Prostate gland (tissue), 2 donors: ENCODE measurements at regions of chr1 and their contacts with region 1.

Region 1: GRCh38 chr1:64469977-64470664 is at the start of gene CACHD1:
- DNase-seq: peak; percentile 81
- H3K4me3 ChIP-seq: peak within 1 kb of the TSS; percentile 56 to 60
- H3K27ac ChIP-seq: peak within 1 kb of the TSS; percentile 81 to 82
- H3K4me1 ChIP-seq: no peaks in the 10 kb centered on the region
- H3K27me3 ChIP-seq: no peaks in the 10 kb centered on the region
- CTCF ChIP-seq: peak; percentile 15 to 74 (median 52)
- POLR2A ChIP-seq: peak; percentile 72
- total RNA-seq, gene CACHD1: 10.8 to 14.4 TPM

Region 2: DNA sequence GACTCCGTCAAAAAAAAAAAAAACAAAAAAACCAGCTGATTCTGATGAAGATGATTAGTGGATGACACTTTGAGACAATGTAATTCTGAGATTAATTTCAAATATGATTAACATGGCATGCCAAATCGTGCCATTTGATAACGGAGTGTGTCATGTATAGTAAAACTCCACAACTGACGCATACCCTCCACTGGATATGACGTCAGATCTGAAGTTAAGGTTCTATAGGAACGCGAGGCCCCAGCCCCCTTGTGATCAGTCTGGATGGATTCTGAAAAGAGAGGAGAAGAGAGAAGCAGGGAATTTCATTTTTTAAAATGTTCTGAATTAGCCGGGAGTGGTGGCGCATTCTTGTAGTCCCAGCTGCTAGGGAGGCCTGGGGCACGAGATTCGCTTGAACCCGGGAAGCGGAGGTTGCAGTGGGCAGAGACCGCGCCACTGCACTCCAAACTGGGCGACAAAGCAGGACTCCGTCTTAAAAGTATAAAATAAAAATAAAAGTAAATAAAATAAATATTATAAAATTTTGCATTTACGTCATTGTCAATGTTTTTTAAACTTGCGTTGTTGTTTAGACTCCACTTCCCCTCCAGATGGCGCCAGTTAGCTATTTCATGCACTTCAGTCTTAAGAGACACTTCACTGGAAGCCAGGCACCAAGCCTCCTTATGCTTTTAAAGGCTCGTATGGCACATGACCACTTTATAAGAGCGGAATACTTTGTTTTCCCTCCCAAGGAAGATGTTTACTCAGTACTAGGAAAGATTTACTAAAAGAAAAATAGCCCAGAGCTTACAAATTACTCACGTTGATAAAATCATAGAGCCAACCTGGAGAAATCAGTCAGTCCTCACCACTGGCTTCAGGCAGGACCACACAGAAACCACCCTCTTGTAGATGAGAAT is 201.2 kb before region 1 on chr1:
- intact Hi-C with region 1: loop called (anchors 5 kb)
- DNase-seq: peak; percentile 77
- H3K4me3 ChIP-seq: no peak overlapping the region
- H3K27ac ChIP-seq: no peak overlapping the region
- H3K4me1 ChIP-seq: no peaks in the 10 kb centered on the region
- H3K27me3 ChIP-seq: no peaks in the 10 kb centered on the region
- CTCF ChIP-seq: peak; percentile 58 to 84 (median 72)
- POLR2A ChIP-seq: no peak

Region 3: GRCh38 chr1:64508521-64509095 is 38.5 kb after region 1 on chr1:
- intact Hi-C with region 1: loop called (anchors 2 kb)
- DNase-seq: no peak
- H3K4me3 ChIP-seq: no peak overlapping the region
- H3K27ac ChIP-seq: no peak overlapping the region
- H3K4me1 ChIP-seq: no peaks in the 10 kb centered on the region
- H3K27me3 ChIP-seq: no peaks in the 10 kb centered on the region
- CTCF ChIP-seq: no peak
- POLR2A ChIP-seq: no peak

Region 4: DNA sequence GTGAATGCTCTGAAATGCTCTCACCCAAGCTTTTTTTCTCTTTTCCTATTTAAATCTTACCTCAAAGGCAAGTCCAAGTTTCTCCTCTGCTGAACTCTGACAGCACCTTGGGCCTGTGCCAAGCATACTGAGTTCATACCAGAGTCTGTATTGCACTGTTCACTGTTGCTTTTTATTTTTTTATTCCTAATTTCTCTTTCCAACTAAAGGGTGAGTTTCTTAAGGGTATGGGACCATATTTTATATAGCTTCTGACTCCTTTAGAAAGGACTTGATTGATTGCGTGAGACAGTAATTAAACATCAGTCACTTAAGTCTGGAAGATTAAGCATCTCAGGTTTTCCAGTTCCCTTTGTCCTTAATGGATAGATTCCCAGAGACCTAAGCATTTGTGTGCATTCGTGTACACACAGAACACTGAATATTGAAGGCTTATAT is 69.7 kb after region 1 on chr1:
- intact Hi-C with region 1: loop called (anchors 5 kb)
- DNase-seq: peak; percentile 26
- H3K4me3 ChIP-seq: no peak overlapping the region
- H3K27ac ChIP-seq: no peak overlapping the region
- H3K4me1 ChIP-seq: peaks cover 10% of the 10 kb centered on the region
- H3K27me3 ChIP-seq: no peaks in the 10 kb centered on the region
- CTCF ChIP-seq: no peak
- POLR2A ChIP-seq: no peak

Region 5: DNA sequence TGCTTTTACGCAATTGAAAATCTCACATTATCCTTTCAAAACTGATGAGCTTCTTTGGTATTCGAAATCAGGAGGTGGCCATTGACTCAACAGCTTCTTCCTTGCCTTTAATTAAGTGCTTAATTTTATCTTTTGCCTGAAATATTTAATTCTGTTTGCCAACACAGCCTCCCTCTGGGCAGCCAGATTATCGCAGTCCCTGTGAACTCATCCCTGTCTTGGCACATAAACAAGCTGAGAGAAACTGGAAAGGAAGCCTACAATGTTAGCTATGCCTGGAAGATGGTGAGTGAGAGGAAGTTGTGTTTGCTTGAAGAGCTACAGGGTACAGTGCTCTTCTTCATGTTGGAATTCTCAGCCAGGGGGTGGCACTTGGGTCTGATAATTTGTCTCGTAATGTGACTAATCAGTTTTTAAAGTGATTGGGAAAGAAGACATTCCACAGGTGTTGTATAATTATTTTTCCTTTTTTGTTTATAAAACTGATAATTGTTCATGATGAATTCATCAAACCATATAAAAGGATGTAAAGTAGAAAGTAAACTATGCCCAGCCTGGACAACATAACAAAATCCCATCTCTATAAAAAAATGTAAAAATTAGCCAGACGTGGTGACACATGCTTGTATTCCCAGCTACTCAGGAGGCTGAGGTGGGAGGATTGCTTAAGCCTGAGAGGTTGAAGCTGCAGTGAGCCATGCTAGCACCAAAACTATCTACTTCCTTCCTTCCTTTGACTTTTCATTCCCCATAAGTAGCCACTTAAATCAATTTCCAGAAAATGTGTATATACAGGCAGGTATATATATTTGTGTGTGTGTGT is 184.6 kb after region 1 on chr1:
- intact Hi-C with region 1: loop called (anchors 5 kb)
- DNase-seq: no peak
- H3K4me3 ChIP-seq: no peak overlapping the region
- H3K27ac ChIP-seq: no peak overlapping the region
- H3K4me1 ChIP-seq: no peaks in the 10 kb centered on the region
- H3K27me3 ChIP-seq: no peaks in the 10 kb centered on the region
- CTCF ChIP-seq: peak in 1 of 4 experiments; percentile 19
- POLR2A ChIP-seq: no peak

Region 6: DNA sequence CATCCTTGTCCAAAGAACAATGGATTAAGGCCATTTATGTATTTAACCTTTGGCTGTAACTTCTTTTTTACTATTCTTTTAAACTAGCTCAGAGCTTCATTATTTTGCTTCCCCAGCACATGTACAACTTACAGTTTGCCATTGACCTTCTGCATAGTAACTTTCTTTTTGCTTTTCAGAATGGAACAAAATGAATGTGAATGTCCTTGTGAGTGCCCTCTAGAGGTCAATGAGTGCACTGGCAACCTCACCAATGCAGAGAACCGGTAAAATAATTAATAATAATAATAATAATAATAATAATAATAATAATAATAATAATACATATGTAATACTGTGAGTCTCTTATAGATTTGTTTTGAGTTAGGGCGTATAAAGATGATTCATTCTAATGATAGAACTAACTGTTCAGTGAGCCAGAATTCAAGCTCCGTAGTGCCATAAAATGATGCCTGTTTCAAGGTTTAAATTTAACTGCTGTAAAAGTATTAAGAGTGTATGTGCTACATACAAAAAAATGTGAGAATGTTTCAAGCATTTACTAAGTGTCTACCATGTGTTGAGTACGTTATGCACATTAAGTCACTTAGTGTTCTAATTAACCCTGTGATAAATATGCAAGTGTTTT is 205.7 kb after region 1 on chr1:
- intact Hi-C with region 1: loop called (anchors 5 kb)
- DNase-seq: no peak
- H3K4me3 ChIP-seq: no peak overlapping the region
- H3K27ac ChIP-seq: no peak overlapping the region
- H3K4me1 ChIP-seq: no peaks in the 10 kb centered on the region
- H3K27me3 ChIP-seq: no peaks in the 10 kb centered on the region
- CTCF ChIP-seq: peak in 3 of 4 experiments; percentile 35 to 47 (median 40)
- POLR2A ChIP-seq: no peak

Region 7: GRCh38 chr1:64823691-64824476 is 353.8 kb after region 1 on chr1:
- intact Hi-C with region 1: loop called (anchors 2 kb)
- DNase-seq: peak; percentile 66
- H3K4me3 ChIP-seq: no peak overlapping the region
- H3K27ac ChIP-seq: no peak overlapping the region
- H3K4me1 ChIP-seq: no peaks in the 10 kb centered on the region
- H3K27me3 ChIP-seq: no peaks in the 10 kb centered on the region
- CTCF ChIP-seq: peak; percentile 52 to 87 (median 82)
- POLR2A ChIP-seq: no peak